Activated naive CD4-positive, alpha-beta T cell treated with anti-CD3 and anti-CD28 coated beads for 36 hours (primary cell): ENCODE measurements at regions of chr2 and their contacts with region 1.

Region 1: DNA sequence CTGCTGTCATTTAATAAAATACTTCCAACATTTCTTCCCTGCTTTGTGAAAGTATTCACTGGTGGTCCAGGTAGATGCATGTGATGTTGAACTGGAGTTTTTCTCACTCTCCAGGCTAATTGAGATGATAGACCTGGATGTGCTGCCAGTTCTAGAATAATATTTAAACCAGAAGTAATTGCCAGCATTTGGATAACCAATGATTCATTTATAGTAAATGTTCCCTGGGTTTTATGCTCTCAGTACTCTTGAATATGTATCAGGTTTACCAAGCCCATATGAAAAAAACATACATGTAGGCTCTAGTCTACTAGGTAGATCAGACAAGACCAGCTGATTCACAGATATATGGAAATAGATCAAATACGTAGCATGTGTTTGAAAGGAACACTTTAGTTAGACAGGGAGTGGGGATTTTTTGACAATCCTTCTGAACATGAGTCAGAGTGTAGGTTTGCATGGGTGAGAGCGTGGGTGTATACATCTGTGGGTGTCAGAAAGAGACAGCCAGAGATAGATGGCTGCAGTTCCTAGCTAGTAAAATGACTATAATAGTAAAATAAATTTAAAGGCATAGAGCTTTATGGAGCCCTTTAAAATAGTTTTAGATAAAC is 115.1 kb downstream of the NAB1 start:
- DNase-seq: peak; percentile 78
- H3K4me3 Mint-ChIP-seq: no peak overlapping the region
- H3K27ac Mint-ChIP-seq: peak overlapping the region; percentile 7
- H3K4me1 Mint-ChIP-seq: peaks cover 56% of the 10 kb centered on the region
- H3K27me3 Mint-ChIP-seq: no peaks in the 10 kb centered on the region

Region 2: DNA sequence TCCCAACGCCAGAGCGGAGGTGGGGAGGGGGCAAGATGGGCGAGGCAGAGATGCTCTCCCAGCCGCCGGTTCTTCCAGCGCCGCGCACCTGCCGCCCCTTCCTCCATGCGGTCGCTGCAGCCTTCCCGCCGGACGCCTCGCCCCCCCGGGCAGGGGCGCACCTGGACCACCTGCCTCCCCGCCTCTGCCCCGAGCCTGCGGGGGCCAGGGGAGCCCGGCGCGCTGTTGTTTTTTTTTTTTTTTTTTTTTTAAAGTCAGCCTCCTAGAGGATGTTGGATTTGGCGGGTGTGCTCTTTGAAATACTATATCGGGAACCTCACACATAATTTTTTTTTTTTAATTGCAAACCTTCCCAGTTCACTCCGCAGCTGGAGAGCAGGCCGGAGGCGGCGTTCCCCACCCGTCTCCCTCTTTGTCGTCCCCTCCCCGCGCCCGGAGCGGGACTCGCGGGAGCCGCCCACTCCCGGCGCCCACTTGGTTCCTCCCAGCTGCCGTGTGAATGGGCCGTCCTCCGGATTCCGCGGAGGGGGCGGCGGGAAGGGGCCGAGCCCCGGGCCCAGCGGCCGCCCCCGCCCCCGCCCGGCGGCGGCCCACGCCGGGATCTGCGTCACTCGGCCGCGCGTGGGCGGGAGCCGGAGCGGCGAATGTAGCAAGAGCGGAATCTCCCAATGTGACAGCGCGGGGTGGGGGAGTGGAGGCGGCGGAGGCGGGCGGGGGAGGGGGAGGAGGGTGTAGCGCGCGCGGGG is 115.5 kb before region 1 on chr2:
- CTCF ChIA-PET with region 1: no interaction called
- intact Hi-C with region 1: loop called (anchors 1 kb)
- DNase-seq: peak; percentile 81
- H3K4me3 Mint-ChIP-seq: peak overlapping the region; percentile 68
- H3K27ac Mint-ChIP-seq: peak overlapping the region; percentile 76
- H3K4me1 Mint-ChIP-seq: peaks cover 43% of the 10 kb centered on the region
- H3K27me3 Mint-ChIP-seq: no peaks in the 10 kb centered on the region

Region 3: DNA sequence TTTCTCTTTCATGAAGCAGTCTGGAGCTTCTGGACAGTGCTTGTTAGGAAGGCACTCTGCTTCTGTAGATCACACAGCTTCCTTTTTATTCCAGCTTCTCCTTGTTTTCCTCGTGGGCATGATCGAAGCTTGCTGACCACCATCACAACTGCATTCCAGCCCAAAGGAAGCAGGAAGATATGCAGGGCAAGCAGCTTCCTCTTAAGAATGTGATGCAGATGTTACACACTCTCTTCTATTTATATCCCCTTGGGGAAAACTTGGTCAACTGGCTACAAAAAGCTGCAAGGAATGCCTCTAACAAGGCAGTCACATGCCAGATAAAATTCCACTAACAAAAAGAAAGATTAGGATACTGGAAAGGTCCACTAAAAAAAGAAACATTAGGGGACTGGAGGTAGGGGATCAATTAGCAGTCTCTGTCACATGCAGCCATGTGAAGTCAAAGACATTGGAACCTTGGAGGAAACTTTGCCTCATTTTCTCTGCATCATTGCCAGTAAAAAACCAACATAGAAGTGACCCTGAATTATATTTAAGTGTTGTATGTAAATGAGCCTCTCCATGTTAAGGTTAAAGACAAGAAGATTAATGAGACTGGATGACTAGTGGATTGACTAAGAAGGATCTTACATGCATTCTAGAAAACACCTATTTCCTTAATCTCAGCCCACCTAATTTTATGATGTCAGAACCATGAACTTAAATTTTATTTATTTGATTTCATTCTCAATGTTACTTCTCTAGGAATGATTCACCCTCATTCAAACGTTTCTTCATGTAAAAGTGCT is 16.8 kb before region 1 on chr2:
- CTCF ChIA-PET with region 1: interaction called, 5 read pairs
- intact Hi-C with region 1: loop called (anchors 1 kb)
- DNase-seq: no peak
- H3K4me3 Mint-ChIP-seq: no peak overlapping the region
- H3K27ac Mint-ChIP-seq: no peak overlapping the region
- H3K4me1 Mint-ChIP-seq: peaks cover 36% of the 10 kb centered on the region
- H3K27me3 Mint-ChIP-seq: no peaks in the 10 kb centered on the region

Region 4: GRCh38 chr2:190791347-190791975 is 27.5 kb after region 1 on chr2:
- CTCF ChIA-PET with region 1: interaction called, 3 read pairs
- intact Hi-C with region 1: loop called (anchors 1 kb)
- DNase-seq: peak; percentile 67
- H3K4me3 Mint-ChIP-seq: no peak overlapping the region
- H3K27ac Mint-ChIP-seq: peak overlapping the region; percentile 83
- H3K4me1 Mint-ChIP-seq: peaks cover 55% of the 10 kb centered on the region
- H3K27me3 Mint-ChIP-seq: no peaks in the 10 kb centered on the region

Region 5: DNA sequence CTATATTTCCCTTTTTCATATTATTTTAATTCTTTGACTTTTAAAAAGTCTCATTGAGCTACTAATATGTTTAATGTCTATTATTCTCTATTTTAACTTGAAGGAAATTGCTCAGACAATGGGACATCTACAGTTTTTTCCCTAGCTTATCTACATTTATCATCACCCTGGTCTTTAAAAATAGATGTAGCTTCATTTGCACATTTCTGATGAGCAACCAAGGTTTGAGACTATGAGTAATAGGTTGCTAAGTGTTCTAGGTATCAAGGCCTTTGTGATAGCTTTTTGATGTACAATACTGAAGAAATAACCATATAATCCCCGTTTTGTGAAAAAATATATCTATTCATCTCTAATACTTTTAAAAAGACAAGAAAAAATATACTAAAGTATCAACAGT is 339.8 kb after region 1 on chr2:
- CTCF ChIA-PET with region 1: no interaction called
- intact Hi-C with region 1: no loop called
- DNase-seq: no peak
- H3K4me3 Mint-ChIP-seq: no peak overlapping the region
- H3K27ac Mint-ChIP-seq: peak overlapping the region; percentile 61
- H3K4me1 Mint-ChIP-seq: peaks cover 69% of the 10 kb centered on the region
- H3K27me3 Mint-ChIP-seq: no peaks in the 10 kb centered on the region